ENCODE measurements at regions of chr2 and their contacts with region 1.

Region 1: GRCh38 chr2:240586198-240586918 is at the start of gene CAPN10:
- DNase-seq: peak; percentile 98
- ATAC-seq: peak; percentile 91
- H3K4me3 Mint-ChIP-seq: peak within 1 kb of the TSS; percentile 91
- H3K27ac Mint-ChIP-seq: peak within 1 kb of the TSS; percentile 89
- H3K4me1 Mint-ChIP-seq: peaks cover 47% of the 10 kb centered on the region
- H3K27me3 Mint-ChIP-seq: no peaks in the 10 kb centered on the region
- total RNA-seq, gene CAPN10: 54.0 to 75.8 TPM

Region 2: GRCh38 chr2:240499309-240500301 is 86.8 kb before region 1 on chr2:
- CTCF ChIA-PET with region 1: no interaction called
- DNase-seq: peak; percentile 32
- ATAC-seq: no peak
- H3K4me3 Mint-ChIP-seq: no peak overlapping the region
- H3K27ac Mint-ChIP-seq: no peak overlapping the region
- H3K4me1 Mint-ChIP-seq: no peaks in the 10 kb centered on the region
- H3K27me3 Mint-ChIP-seq: no peaks in the 10 kb centered on the region

Region 3: GRCh38 chr2:240560480-240561326 is 25.7 kb before region 1 on chr2:
- CTCF ChIA-PET with region 1: interaction called, 99 read pairs
- DNase-seq: peak; percentile 100
- ATAC-seq: peak; percentile 63
- H3K4me3 Mint-ChIP-seq: peak overlapping the region; percentile 85
- H3K27ac Mint-ChIP-seq: peak overlapping the region; percentile 82
- H3K4me1 Mint-ChIP-seq: peaks cover 77% of the 10 kb centered on the region
- H3K27me3 Mint-ChIP-seq: no peaks in the 10 kb centered on the region

Region 4: GRCh38 chr2:240611601-240612210 is 25.3 kb after region 1 on chr2:
- CTCF ChIA-PET with region 1: interaction called, 17 read pairs
- DNase-seq: peak; percentile 85
- ATAC-seq: peak; percentile 48
- H3K4me3 Mint-ChIP-seq: peak overlapping the region; percentile 49
- H3K27ac Mint-ChIP-seq: no peak overlapping the region
- H3K4me1 Mint-ChIP-seq: peaks cover 42% of the 10 kb centered on the region
- H3K27me3 Mint-ChIP-seq: no peaks in the 10 kb centered on the region

Region 5: DNA sequence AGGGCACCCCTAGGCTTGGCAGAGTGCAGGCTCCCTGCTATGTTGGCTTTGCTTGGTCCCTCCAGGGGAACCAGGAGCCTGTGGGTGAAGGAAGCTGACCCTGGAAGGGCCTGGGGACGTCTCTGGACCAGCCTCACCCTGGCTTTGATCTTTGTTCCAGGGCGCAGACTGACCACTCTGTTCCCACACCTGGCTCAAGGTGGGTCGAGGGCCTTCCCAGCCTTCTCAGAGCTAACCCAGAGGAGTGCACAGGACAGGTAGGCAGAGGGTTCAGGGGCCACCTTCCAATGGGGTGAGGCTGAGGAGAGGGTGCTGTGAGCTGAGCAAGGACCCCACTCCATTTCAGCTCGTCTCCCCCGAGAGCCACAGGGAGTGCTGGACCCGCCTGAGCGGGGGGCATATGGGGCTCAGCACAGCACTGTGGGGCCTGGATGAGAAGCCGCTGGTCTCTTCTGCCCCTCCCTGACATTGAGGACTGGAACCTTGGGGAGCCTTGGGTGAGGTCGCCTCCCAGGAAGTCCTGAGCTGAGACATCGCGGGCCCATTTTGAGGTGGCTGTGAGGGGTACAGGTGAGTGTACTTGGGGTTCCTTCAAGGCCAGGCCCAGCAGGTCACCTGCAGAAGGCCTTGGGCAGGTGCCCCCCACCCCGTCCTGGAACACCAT is 102.0 kb after region 1 on chr2:
- CTCF ChIA-PET with region 1: no interaction called
- DNase-seq: no peak
- ATAC-seq: no peak
- H3K4me3 Mint-ChIP-seq: no peak overlapping the region
- H3K27ac Mint-ChIP-seq: no peak overlapping the region
- H3K4me1 Mint-ChIP-seq: peaks cover 20% of the 10 kb centered on the region
- H3K27me3 Mint-ChIP-seq: no peaks in the 10 kb centered on the region